ENCODE measurements at regions of chr21 and their contacts with region 1.

Region 1: DNA sequence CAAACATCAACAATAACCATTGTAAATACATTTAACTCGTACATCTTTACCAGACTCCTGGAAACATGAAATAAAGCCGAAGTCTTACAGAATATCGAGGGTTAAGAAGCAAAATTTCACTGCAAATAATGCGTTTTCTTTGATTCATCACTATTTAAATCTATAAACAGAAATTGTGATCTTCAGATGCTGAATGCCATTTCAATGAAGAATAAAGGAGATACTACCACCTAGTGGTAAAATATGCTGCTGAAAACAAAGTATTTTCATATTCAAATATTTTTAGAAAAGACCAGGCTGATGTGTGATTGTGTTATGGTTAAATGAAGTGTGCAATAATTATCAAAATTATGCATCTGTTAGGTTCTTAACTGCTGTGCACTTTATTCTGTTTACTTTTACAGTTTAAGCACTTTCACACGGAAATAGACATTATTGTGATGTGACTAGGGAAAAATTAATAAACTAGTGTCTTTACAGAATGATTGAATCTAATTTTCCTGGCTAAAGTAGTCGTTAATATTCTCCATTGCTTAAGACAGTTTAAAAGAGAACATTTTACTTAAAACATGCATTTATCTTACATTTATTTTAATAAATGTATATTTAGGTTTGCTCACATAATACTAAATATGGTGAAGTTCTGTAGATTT is 1093.1 kb downstream of the MRPL39 start:
- DNase-seq: no peak
- H3K4me3 ChIP-seq: no peak overlapping the region
- CTCF ChIP-seq: peak; percentile 5

Region 2: DNA sequence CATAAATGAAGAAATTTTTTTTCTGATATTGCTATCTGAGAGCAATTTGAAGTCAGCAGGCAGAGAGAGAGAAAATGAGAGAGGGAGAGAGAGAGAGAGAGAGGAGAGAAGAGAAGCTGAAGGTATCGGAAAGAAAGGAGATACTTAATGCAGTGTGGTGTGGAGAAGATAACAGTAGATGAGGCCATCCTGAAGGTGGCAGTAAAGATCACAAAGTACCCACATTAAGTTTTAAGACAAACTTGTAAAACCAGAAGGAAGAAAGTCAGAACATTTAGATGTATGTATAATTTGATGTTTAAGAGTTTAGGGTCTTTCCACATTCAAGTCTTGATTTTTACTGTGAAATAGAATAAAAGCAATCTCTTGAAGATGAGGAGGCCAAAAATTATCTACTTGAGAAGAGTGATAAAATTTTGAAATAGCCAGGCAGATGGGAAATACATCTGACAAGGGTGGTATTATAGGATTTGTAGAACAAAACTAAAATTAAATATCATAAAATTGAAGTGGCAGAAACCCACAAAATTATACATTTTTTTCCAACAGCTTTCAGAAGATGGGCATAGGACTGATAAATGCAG is 660.3 kb before region 1 on chr21:
- CTCF ChIA-PET with region 1: interaction called, 23 read pairs
- POLR2A ChIA-PET with region 1: no interaction called
- DNase-seq: no peak
- H3K4me3 ChIP-seq: no peak overlapping the region
- CTCF ChIP-seq: peak; percentile 41

Region 3: DNA sequence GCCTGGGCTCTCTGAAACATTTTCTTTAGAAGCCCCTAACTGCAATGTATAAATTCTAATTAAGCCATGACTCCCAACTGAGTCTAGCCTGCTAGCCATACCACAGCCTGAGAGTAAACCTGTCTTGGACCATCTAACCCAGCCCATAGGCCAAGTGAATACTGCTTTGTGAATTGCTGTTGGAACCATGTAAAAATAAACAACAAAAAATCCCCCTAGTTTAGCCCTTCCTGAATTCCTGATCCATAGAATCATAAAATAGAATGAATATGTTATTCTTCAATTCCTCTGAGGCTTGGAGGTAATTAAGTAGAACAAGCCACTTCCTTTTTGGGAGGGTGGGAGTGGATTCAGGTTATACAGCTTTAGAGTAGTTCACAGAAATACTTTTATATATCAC is 403.4 kb before region 1 on chr21:
- CTCF ChIA-PET with region 1: no interaction called
- POLR2A ChIA-PET with region 1: no interaction called
- DNase-seq: peak; percentile 16
- H3K4me3 ChIP-seq: no peak overlapping the region
- CTCF ChIP-seq: no peak

Measured in AG04449 (cell line).